ENCODE measurements at regions of chr6 and their contacts with region 1.

Region 1: DNA sequence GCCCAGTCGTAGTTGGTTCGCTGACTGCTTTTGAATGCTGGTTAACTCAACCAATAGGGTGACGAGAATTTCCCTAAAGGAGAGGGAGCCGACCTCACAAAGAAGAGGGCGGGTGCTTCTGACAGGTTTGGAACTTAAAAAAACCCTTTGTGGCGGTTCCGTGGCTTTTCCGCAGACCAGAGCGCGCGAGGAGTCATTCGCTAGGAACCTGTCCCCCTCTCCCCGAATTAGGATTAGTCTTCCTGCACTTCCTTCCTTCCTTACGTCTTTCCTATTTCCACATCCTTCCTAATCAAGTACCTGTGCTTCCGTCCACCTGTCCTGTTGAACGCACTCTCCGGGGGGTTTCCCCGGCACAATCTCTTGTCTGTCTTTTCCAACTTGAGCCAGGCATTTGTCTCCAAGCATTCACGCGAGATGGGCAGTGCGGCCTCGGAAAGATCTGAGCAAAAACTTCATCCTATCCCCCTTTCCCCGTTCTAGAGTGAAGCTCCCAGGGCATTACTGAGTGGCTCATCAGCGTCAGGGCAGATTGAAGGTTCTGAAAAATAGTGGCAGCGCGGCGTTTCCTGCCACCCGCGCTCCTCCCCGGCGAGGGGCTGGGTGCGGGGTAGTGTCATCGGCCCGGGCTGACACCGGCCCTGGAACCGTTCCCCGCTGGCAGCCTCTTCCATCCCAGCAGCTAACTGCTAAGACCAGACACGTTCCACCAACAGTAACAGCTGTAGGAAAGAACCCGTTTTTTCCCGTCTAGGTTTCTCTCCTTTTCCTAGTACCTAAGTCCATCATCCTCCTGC is 1.5 kb upstream of the STXBP5 start:
- DNase-seq: peak; percentile 97
- H3K4me3 ChIP-seq: peak overlapping the region; percentile 90
- H3K27ac ChIP-seq: peak overlapping the region; percentile 84
- H3K4me1 ChIP-seq: peaks cover 10% of the 10 kb centered on the region
- H3K27me3 ChIP-seq: no peaks in the 10 kb centered on the region
- CTCF ChIP-seq: no peak

Region 2: GRCh38 chr6:146884728-146885127 is 318.0 kb before region 1 on chr6:
- CTCF ChIA-PET with region 1: no interaction called
- POLR2A ChIA-PET with region 1: no interaction called
- intact Hi-C with region 1: loop called (anchors 10 kb)
- DNase-seq: no peak
- H3K4me3 ChIP-seq: no peak overlapping the region
- H3K27ac ChIP-seq: no peak overlapping the region
- H3K4me1 ChIP-seq: peaks cover 23% of the 10 kb centered on the region
- H3K27me3 ChIP-seq: no peaks in the 10 kb centered on the region
- CTCF ChIP-seq: no peak

Measured in A673 (cell line).